ENCODE measurements at regions of chr12 and their contacts with region 1.

Region 1: DNA sequence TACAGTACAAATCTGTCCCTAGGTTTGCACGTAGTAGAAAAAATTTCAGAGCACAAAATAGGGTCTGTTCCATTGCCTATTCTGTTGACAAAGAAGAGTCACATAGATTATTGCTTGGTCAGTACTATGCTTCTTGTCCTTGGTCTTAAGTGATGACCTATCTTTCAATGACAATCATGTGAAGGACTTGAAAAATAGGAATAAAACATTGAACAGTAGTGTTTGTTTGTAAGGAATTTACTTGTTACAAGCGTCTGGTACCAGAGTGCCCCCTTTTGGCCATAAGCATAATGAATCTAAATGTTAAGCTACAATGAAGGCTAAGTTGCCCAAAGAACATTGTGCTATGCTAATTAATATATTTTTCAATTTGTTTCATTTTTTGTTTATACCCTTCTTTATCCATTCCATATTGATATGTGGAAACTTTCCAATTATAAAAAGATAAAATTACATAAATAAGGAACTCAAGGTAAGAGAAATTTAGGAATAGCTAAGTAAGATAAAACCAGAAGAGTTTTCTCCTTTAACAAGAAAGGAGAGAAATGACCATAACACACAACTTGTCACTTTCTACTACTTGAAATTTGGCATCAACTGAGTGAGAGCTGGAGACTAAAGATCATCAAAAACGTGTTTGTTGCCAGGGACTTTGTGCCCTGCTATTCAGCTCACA is 204.7 kb downstream of the EPS8 start:
- DNase-seq: peak; percentile 70
- H3K4me3 Mint-ChIP-seq: no peak overlapping the region
- H3K27ac Mint-ChIP-seq: peak overlapping the region; percentile 12
- H3K4me1 Mint-ChIP-seq: no peaks in the 10 kb centered on the region
- H3K27me3 Mint-ChIP-seq: no peaks in the 10 kb centered on the region
- CTCF ChIP-seq: peak; percentile 62

Region 2: DNA sequence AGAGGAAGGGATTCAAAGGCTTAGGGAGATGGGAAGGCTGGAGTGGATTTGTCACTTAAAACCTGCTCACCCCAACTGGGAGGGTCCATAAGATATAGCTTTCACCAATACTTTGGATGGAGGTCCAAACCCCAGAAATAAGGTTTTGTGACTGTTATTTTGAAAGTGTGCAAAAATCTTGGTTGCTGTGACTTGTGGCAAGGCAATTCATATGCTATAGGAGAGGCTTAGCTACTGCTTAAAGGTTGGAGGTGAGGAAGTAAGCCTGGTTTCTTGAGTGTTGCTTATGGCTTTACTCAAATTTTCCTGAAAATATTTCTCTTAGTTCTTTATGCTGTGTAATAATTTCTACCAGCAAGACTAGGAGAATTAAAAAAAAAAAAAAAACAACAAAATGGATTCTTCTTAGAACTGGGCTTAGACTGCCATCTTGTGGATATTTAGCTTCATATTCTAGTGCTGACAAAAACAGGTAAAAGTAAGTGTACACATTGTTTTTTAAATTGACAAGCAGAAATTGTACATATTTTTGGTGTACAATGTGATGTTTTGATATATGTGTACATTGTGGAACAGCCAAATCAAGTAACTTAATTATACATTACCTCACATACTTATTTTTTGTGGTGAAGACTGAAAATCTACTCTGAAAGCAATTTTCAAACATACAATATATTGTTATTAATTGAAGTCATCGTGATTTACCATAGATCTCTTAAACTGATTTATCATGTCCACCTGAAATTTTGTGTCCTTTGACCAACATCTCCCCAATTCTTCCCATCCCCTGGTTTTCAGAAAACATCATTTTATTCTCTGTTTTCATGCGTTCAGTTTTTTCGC is 588.7 kb before region 1 on chr12:
- CTCF ChIA-PET with region 1: no interaction called
- POLR2A ChIA-PET with region 1: no interaction called
- intact Hi-C with region 1: loop called (anchors 10 kb)
- DNase-seq: peak; percentile 71
- H3K4me3 Mint-ChIP-seq: no peak overlapping the region
- H3K27ac Mint-ChIP-seq: peak overlapping the region; percentile 59
- H3K4me1 Mint-ChIP-seq: peaks cover 20% of the 10 kb centered on the region
- H3K27me3 Mint-ChIP-seq: no peaks in the 10 kb centered on the region
- CTCF ChIP-seq: peak; percentile 53

Region 3: GRCh38 chr12:15268927-15269552 is 315.5 kb before region 1 on chr12:
- CTCF ChIA-PET with region 1: interaction called, 6 read pairs
- POLR2A ChIA-PET with region 1: no interaction called
- intact Hi-C with region 1: loop called (anchors 1 kb)
- DNase-seq: peak; percentile 85
- H3K4me3 Mint-ChIP-seq: no peak overlapping the region
- H3K27ac Mint-ChIP-seq: peak overlapping the region; percentile 70
- H3K4me1 Mint-ChIP-seq: peaks cover 19% of the 10 kb centered on the region
- H3K27me3 Mint-ChIP-seq: no peaks in the 10 kb centered on the region
- CTCF ChIP-seq: peak; percentile 83

Region 4: DNA sequence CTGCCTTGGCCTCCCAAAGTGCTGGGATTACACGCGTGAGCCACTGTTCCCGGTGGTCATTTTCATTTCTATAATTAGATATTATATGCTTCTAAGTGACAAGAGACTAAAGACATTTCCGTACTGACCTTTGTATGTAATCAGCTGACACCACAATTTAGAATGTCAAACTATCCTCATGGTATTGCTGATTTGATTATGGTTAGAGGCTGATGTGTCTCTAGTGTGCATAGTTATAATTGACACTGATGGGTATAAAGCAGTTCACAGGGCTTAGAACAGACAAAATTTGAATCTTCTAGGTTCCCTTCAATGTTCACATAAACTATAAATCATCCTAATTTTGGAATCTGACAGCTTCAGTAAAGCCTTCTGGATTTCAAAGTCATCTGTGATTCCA is 69.5 kb before region 1 on chr12:
- CTCF ChIA-PET with region 1: no interaction called
- POLR2A ChIA-PET with region 1: no interaction called
- intact Hi-C with region 1: no loop called
- DNase-seq: no peak
- H3K4me3 Mint-ChIP-seq: no peak overlapping the region
- H3K27ac Mint-ChIP-seq: no peak overlapping the region
- H3K4me1 Mint-ChIP-seq: no peaks in the 10 kb centered on the region
- H3K27me3 Mint-ChIP-seq: no peaks in the 10 kb centered on the region
- CTCF ChIP-seq: no peak

Region 5: GRCh38 chr12:15532364-15532977 is 52.0 kb before region 1 on chr12:
- CTCF ChIA-PET with region 1: interaction called, 218 read pairs
- POLR2A ChIA-PET with region 1: interaction called, 7 read pairs
- intact Hi-C with region 1: loop called (anchors 1 kb)
- DNase-seq: peak; percentile 89
- H3K4me3 Mint-ChIP-seq: no peak overlapping the region
- H3K27ac Mint-ChIP-seq: peak overlapping the region; percentile 57
- H3K4me1 Mint-ChIP-seq: peaks cover 29% of the 10 kb centered on the region
- H3K27me3 Mint-ChIP-seq: no peaks in the 10 kb centered on the region
- CTCF ChIP-seq: peak; percentile 71

Region 6: DNA sequence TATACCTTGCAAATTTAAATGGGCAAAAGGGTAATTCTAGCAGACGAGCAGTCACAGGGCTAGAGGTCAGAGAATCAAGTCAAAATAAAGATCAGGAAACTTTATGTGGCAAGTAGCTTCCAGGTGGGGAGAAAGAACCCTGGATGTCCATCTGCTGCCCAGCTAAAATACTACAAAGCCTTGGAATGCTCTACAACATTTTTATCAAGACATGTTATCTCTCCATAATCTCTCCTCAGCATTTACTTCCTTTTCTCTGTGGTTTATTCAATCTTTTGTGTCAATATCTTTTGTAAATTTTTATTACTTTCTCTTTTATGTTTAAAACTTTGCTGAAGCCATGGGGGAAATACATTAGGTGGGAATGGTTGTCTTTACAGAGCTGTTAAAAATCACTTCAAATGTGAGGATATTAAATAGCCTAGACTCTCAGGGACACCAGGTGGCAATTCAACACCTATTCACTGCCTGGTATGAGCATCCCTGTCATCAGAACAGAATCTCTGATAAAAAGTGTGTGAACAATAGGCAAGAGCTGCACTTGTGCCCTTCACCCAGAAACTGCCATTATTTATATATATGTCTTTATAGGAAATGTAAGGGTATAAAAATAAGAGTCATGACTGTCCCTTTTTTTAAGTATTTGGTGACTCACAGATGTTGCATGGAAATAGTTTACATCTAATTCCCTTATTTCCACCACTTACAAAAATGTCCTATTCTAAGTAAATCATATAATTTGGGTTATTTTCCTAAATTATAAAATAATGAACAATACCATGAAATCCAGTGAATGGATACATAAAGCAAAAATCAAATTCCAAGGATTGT is 51.8 kb after region 1 on chr12:
- CTCF ChIA-PET with region 1: no interaction called
- POLR2A ChIA-PET with region 1: no interaction called
- intact Hi-C with region 1: no loop called
- DNase-seq: no peak
- H3K4me3 Mint-ChIP-seq: no peak overlapping the region
- H3K27ac Mint-ChIP-seq: peak overlapping the region; percentile 42
- H3K4me1 Mint-ChIP-seq: peaks cover 28% of the 10 kb centered on the region
- H3K27me3 Mint-ChIP-seq: no peaks in the 10 kb centered on the region
- CTCF ChIP-seq: no peak

Region 7: DNA sequence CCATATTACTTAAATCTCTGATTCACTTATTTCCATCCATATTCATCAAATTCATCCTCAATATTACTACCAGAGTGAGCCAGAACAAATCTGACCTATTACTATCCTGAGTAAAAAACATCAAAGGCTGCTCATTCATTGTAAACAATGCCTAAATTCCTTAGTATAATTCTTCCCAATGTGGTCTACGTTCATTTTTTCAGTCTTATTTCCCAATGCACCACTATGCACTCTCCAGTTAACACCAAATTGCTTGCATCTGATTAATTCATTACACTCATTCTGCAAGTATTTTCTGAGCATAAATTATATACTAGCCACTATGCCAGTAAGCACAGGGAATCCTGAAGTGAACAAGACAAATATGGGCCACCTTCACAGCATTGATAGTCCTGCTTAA is 94.6 kb after region 1 on chr12:
- CTCF ChIA-PET with region 1: no interaction called
- POLR2A ChIA-PET with region 1: no interaction called
- intact Hi-C with region 1: no loop called
- DNase-seq: no peak
- H3K4me3 Mint-ChIP-seq: no peak overlapping the region
- H3K27ac Mint-ChIP-seq: no peak overlapping the region
- H3K4me1 Mint-ChIP-seq: peaks cover 24% of the 10 kb centered on the region
- H3K27me3 Mint-ChIP-seq: no peaks in the 10 kb centered on the region
- CTCF ChIP-seq: no peak

Region 8: DNA sequence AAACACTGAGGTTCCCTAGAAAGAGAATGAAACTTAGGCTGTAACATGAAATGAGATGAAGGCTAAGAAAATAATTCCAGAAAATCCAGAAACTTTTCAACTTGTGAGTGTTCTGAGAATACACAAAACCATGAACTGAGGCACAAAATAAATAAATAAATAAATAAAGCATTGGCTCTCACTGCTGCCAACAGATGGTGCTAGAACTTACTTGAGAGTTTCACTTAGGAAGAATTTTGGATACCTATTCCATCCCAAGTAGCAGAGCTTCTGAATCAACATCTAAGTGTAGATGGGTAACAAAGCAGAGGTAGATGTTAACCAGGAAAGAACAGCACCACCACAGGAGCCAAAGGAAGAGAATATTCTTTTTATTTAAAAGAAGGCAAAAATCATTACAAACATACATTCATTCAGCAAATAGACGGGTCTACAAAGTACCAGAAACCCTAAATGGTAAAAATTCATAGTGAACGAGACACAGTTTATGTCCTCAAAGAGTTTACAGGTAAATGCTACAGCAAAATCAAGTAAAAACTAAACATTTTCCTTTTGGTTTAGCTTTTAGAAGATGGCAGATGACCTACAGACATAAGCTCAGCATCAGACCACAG is 188.0 kb after region 1 on chr12:
- CTCF ChIA-PET with region 1: interaction called, 10 read pairs
- POLR2A ChIA-PET with region 1: no interaction called
- intact Hi-C with region 1: no loop called
- DNase-seq: peak; percentile 55
- H3K4me3 Mint-ChIP-seq: no peak overlapping the region
- H3K27ac Mint-ChIP-seq: no peak overlapping the region
- H3K4me1 Mint-ChIP-seq: peaks cover 44% of the 10 kb centered on the region
- H3K27me3 Mint-ChIP-seq: no peaks in the 10 kb centered on the region
- CTCF ChIP-seq: peak; percentile 42